ENCODE measurements at regions of chr5 and their contacts with region 1.

Region 1: GRCh38 chr5:138223532-138223931 is 10.4 kb upstream of the CDC23 start:
- DNase-seq: no peak
- H3K4me3 ChIP-seq: no peak overlapping the region
- H3K27ac ChIP-seq: no peak overlapping the region
- H3K4me1 ChIP-seq: peaks cover 5 to 10% (median 8%) of the 10 kb centered on the region in 4 donors
- H3K27me3 ChIP-seq: no peaks in the 10 kb centered on the region
- CTCF ChIP-seq: no peak
- EP300 ChIP-seq: no peak
- POLR2A ChIP-seq: no peak

Region 2: GRCh38 chr5:138282920-138283742 is 59.6 kb after region 1 on chr5:
- intact Hi-C with region 1: loop called (anchors 1 kb)
- DNase-seq: no peak
- H3K4me3 ChIP-seq: no peak overlapping the region
- H3K27ac ChIP-seq: no peak overlapping the region
- H3K4me1 ChIP-seq: peaks cover 0 to 2% (median 0%) of the 10 kb centered on the region in 4 donors
- H3K27me3 ChIP-seq: no peaks in the 10 kb centered on the region
- CTCF ChIP-seq: peak; percentile 41 to 54 (median 43)
- EP300 ChIP-seq: no peak
- POLR2A ChIP-seq: no peak

Region 3: GRCh38 chr5:138360941-138361452 is 137.5 kb after region 1 on chr5:
- intact Hi-C with region 1: no loop called
- DNase-seq: no peak
- H3K4me3 ChIP-seq: no peak overlapping the region
- H3K27ac ChIP-seq: no peak overlapping the region
- H3K4me1 ChIP-seq: peaks cover 14 to 47% (median 30%) of the 10 kb centered on the region in 4 donors
- H3K27me3 ChIP-seq: no peaks in the 10 kb centered on the region
- CTCF ChIP-seq: no peak
- EP300 ChIP-seq: no peak
- POLR2A ChIP-seq: no peak

Region 4: GRCh38 chr5:138408023-138408422 is 184.5 kb after region 1 on chr5:
- intact Hi-C with region 1: loop called (anchors 2 kb)
- DNase-seq: no peak
- H3K4me3 ChIP-seq: no peak overlapping the region
- H3K27ac ChIP-seq: no peak overlapping the region
- H3K4me1 ChIP-seq: no peaks in the 10 kb centered on the region
- H3K27me3 ChIP-seq: no peaks in the 10 kb centered on the region
- CTCF ChIP-seq: no peak
- EP300 ChIP-seq: no peak
- POLR2A ChIP-seq: no peak

Region 5: GRCh38 chr5:138464008-138464387 is 240.5 kb after region 1 on chr5:
- intact Hi-C with region 1: no loop called
- DNase-seq: peak; percentile 96
- H3K4me3 ChIP-seq: peak overlapping the region; percentile 67 to 98 (median 74)
- H3K27ac ChIP-seq: peak overlapping the region; percentile 96 to 99 (median 98)
- H3K4me1 ChIP-seq: peaks cover 32 to 59% (median 42%) of the 10 kb centered on the region in 4 donors
- H3K27me3 ChIP-seq: no peaks in the 10 kb centered on the region
- CTCF ChIP-seq: peak; percentile 86 to 91 (median 91)
- EP300 ChIP-seq: no peak
- POLR2A ChIP-seq: peak; percentile 64